Heart right ventricle (tissue), 16 donors: ENCODE measurements at regions of chr6 and their contacts with region 1.

Region 1: DNA sequence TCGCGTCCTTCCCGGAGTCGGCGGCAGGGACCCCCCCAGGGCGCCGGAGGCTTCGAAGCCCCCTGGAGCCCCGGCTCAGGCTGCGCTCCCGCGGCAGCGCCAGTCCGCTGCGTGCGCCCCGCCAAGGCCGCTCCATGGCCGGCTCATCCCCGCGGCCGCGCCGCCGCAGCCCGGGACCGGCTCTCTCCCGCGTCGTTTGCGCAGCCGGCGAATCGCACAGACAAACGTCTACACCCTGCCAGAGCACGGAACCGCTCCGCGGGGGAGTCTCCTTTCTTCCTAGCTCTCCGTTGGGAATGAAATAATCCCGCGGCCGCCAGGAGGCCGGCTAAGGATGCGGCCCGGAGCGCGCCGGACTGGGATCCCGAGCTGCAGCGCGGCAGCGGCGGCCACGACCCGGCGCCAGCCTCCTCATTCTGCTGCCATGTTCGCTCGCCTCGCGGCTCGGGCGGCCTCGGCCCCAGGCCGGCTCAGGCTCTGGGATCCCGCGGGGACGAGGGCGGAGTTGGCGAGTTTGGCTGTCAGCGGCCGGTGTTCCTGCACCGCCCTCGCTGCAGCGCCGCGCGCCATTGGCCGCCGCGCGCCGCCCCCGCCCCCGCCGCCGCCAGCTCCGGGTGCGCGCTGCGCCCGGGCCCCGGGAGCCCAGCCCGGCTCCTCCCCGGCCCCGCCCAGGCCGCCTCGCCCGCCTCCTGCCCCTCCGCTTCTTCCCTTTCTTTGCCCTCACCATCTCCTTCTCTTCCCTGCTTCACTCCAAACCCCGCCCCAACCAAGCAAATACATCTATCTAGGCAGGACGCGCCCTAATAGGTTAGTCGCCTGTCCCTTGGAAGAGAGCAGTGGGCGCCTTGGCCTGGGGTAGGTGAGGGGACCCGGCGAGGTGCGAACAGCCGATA is at the start of gene GFOD1:
- DNase-seq: peak; percentile 90 to 92
- ATAC-seq: peak; percentile 83 to 94 (median 86)
- H3K4me3 ChIP-seq: peak within 1 kb of the TSS; percentile 69 to 98 (median 90)
- H3K27ac ChIP-seq: peak within 1 kb of the TSS; percentile 91 to 98 (median 94)
- H3K4me1 ChIP-seq: peaks cover 3 to 46% (median 39%) of the 10 kb centered on the region in 9 donors
- H3K27me3 ChIP-seq: no peaks in the 10 kb centered on the region
- CTCF ChIP-seq: peak in 4 of 9 donors; percentile 20 to 40 (median 32)
- total RNA-seq, gene GFOD1: 26.5 to 96.5 (median 41.0) TPM

Region 2: DNA sequence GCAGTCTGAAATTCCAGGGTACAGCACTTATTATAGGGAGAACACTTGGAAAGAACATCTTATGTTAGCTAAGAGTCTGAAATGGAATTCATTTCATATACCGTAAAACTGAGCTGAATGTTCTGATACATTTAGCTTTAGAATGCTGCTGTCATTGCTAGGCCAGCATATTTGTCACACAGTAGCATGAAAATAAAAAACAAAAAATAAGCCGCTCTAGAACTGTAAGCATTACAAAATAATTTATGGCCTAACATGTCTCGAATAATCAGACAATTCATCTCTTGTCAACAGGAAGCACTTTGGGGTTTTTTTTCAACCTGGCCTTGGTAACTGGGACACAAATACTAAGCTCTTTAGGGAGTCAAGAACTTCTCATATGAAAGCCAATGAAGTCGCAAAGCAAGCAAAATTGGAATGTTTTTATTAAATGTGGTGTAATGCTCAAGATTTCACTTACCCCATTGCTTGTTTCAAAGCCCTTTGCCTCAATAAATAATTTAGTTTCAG is 655.1 kb before region 1 on chr6:
- intact Hi-C with region 1: no loop called
- DNase-seq: no peak
- ATAC-seq: no peak
- H3K4me3 ChIP-seq: no peak overlapping the region
- H3K27ac ChIP-seq: no peak overlapping the region
- H3K4me1 ChIP-seq: no peaks in the 10 kb centered on the region
- H3K27me3 ChIP-seq: peaks cover 0 to 14% (median 7%) of the 10 kb centered on the region in 7 donors
- CTCF ChIP-seq: no peak

Region 3: DNA sequence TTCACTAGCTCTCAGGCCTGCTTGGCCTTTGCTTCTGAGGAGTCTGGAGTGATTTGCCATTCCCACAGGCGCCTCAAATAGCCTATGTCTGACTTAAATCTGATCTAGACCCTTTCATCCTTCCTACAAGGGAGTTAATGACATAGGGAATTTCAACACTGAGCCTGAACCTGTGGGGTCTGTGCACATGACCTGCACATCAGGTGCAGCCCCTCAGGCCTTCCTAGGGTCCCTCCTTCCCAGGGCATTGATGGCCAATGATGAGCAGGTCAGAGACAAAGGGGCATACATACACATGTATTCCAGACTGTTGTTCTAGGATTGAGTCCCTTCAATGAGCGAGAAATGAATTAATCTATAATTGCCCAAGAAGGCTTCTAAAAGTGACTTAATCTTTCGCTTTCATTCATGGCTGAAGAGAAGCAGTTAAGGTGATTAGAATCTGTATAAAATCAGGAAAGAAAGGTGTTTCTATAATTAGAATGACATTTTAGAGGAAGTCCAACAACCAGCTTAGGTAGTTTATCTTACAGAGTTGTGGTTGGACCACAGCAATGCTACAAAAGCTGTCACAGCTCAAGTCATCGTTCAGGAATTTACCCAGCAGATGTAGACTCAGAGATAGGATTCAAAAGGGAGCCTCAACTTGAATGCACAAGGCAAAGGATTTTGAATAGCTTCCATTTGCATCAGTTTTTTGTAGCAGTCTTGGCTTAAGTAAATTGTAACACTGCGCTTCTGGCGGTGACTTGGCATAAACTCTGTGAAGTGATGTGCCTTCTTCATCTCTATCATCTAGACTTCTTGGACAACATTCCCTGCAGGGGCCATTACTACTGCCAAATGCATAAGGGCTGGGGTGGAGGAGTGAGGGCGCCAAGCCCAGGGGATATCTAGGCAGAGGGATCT is 132.1 kb before region 1 on chr6:
- intact Hi-C with region 1: loop called in 1 of 10 experiments (anchors 5 kb)
- DNase-seq: no peak
- ATAC-seq: peak in 5 of 8 donors; percentile 25 to 53 (median 51)
- H3K4me3 ChIP-seq: peak overlapping the region in 1 of 10 donors; percentile 14
- H3K27ac ChIP-seq: peak overlapping the region in 8 of 10 donors; percentile 19 to 78 (median 59)
- H3K4me1 ChIP-seq: peaks cover 3 to 68% (median 48%) of the 10 kb centered on the region in 9 donors
- H3K27me3 ChIP-seq: no peaks in the 10 kb centered on the region
- CTCF ChIP-seq: no peak

Region 4: GRCh38 chr6:13413900-13414555 is 73.3 kb before region 1 on chr6:
- intact Hi-C with region 1: loop called in 6 of 10 experiments (anchors 5 kb)
- DNase-seq: peak in 1 of 2 donors; percentile 49
- ATAC-seq: peak; percentile 37 to 82 (median 72)
- H3K4me3 ChIP-seq: no peak overlapping the region
- H3K27ac ChIP-seq: peak overlapping the region; percentile 62 to 89 (median 83)
- H3K4me1 ChIP-seq: peaks cover 16 to 99% (median 81%) of the 10 kb centered on the region in 9 donors
- H3K27me3 ChIP-seq: no peaks in the 10 kb centered on the region
- CTCF ChIP-seq: peak in 3 of 9 donors; percentile 19 to 43 (median 42)

Region 5: DNA sequence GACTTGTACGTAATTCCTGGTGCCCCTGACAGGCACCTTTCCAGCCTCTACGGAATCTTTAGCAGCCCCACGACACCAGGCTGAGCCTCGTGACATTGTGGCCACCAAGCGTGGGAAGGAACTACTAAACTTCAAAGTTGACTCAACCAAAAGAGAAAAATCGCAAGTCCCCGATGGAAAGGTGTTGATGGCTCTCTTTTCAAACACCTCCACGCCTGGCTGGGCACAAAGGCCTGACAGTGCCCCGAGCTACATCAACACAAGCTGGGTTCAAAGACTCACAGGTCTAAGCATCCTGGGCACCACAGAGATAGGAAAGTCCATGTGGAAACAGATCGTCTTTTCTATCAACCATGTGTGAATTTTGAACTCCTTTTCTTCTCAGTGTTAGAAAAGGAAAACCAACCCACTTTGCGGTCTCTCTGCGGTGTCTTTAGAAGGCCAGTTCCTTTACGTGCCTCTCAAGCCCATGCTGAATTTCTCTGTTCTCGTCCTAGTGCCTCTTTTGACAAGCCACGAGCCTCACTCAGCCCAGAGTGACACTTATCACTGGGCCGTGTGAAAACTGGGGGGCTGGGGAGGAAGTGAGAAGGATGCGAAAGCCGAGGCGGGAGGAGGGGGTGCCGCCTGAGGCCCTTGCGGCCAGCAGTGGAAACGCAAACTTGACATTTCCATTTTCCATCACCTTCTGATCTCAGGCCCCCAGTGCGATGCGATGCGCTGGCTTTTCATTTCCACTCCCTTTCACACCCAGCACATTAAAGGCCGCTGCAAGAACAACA is 59.4 kb before region 1 on chr6:
- intact Hi-C with region 1: loop called in 1 of 10 experiments (anchors 10 kb)
- DNase-seq: no peak
- ATAC-seq: peak in 1 of 8 donors; percentile 10
- H3K4me3 ChIP-seq: peak overlapping the region in 1 of 10 donors; percentile 13
- H3K27ac ChIP-seq: peak overlapping the region in 8 of 10 donors; percentile 12 to 84 (median 74)
- H3K4me1 ChIP-seq: peaks cover 18 to 95% (median 85%) of the 10 kb centered on the region in 9 donors
- H3K27me3 ChIP-seq: no peaks in the 10 kb centered on the region
- CTCF ChIP-seq: peak in 1 of 9 donors; percentile 20

Region 6: DNA sequence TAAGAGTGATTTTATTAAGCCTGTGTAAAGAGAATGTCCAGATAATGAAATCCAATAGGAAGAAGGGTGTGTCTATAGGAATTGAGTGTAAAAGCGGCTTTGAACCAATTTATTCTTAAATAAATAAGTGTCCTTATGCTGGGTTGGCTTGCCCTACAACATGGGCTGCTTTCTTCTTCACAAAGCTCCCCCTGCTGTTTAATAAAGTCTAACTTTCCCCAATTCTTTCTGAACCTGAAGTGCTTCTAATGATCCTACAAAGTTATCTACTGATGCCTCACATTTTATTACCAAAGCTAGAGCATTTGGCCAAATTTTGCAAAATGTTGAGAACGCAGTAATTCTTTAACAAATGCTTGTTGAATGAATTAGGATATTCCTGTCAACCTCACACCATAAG is 50.7 kb after region 1 on chr6:
- intact Hi-C with region 1: loop called in 1 of 10 experiments (anchors 5 kb)
- DNase-seq: no peak
- ATAC-seq: peak in 7 of 8 donors; percentile 69 to 84 (median 75)
- H3K4me3 ChIP-seq: no peak overlapping the region
- H3K27ac ChIP-seq: peak overlapping the region in 7 of 10 donors; percentile 24 to 71 (median 34)
- H3K4me1 ChIP-seq: peaks cover 0 to 33% (median 12%) of the 10 kb centered on the region in 9 donors
- H3K27me3 ChIP-seq: no peaks in the 10 kb centered on the region
- CTCF ChIP-seq: peak; percentile 28 to 73 (median 59)